Cardiac septum (tissue), 1 donor: ENCODE measurements at regions of chr4 and their contacts with region 1.

Region 1: DNA sequence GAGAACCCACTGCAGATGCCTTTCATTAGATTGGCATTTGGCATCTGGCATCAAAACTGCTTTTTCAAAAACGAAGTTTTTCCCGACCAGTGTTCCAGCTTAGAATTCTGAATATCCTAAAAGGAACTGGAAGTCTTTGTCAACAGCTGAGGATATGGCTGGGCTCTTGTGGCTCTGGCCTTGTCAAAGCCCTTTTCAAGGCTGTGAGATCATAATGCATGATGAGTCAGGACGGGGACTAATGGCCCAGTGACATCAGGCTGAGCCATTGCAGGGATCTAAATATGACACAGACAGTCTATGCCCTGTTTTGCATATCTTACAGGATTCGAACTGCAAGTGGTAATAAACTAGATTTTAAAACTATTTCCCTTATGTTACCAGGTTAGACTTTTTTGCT is 306.4 kb downstream of the PTTG2 start:
- DNase-seq: no peak

Region 2: DNA sequence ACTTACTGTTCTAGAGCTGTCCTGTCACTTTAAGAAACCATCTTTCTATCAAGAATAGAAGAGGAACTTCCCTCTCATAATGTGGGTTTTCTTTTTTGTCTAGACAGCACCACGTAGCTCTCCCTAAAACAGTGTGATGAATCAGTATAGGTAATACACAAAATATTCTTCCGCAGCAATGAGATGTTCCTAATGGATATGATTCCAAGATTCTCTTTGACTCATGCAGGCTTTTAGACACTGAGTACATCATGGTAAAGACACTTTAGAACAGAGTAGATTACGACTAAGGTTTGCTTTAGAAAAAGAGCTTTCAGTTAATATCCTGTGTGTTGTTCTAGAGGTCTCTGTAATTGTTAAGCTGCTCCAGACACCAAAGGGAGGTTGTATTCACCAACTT is 236.6 kb before region 1 on chr4:
- intact Hi-C with region 1: no loop called
- DNase-seq: no peak

Region 3: GRCh38 chr4:38190717-38191178 is 75.9 kb before region 1 on chr4:
- intact Hi-C with region 1: loop called (anchors 5 kb)
- DNase-seq: peak; percentile 84

Region 4: DNA sequence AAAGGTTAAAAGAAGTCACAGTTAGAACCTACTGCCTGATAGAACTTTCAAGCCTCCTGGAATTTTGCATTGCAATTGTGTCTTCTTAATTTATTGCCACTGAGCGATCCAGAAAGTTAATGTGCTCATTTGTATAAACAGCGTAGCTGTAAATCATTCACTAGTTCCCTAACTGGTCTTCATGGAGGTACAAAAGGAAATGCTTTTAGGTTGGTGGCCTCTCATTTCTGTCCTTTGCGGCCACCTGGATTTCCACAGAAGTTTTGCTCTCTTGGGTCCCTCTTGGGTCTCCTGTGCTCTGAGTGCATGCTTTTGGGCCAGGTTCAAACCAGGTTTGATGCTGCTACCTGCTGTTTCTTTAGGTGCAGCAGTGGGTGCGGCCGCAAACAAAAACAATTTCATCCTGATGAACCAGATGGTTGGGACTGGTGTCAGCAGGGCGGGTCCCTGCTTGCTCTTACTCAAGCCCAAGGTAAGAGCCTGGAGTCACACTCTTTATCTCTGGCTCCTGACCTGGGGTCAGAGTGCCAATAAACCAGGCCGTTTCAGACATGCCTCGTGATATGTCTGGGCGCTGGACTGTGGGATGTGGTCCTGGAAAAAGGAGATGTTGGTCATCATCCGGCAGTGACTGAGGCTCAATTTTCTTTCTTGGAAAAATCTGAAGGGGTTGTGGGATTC is 36.4 kb before region 1 on chr4:
- intact Hi-C with region 1: no loop called
- DNase-seq: no peak

Region 5: DNA sequence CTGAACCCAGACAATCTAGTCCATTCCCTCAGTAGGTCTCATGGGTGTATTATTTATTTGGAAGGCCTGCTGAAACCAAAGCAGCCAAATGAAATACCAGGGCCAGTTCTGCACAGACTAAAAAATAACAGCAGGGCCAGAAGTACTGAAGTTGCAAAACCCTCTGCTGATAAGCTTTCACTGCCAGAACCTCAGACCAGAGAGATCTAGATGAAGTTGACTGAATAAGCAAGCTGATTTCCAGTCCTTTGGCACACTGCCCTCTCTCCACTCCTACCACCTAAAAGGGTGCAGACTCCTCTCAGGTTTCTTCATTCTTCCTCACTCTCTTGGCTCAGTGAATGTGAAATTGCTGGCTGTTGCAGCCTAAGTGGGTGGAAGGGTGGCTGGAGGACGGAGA is 120.7 kb after region 1 on chr4:
- intact Hi-C with region 1: no loop called
- DNase-seq: no peak

Region 6: GRCh38 chr4:38562751-38563198 is 296.2 kb after region 1 on chr4:
- intact Hi-C with region 1: no loop called
- DNase-seq: peak; percentile 79